CD8-positive, alpha-beta T cell (primary cell): ENCODE measurements at regions of chr7 and their contacts with region 1.

Region 1: GRCh38 chr7:39623018-39623731 is at the start of gene RALA:
- DNase-seq: peak; percentile 75 to 93 (median 91)
- ATAC-seq: peak; percentile 86
- H3K4me3 ChIP-seq: peak within 1 kb of the TSS; percentile 77 to 85
- H3K4me3 Mint-ChIP-seq: peak within 1 kb of the TSS; percentile 97
- H3K27ac ChIP-seq: peak within 1 kb of the TSS; percentile 81 to 89
- H3K27ac Mint-ChIP-seq: peak within 1 kb of the TSS; percentile 98
- H3K4me1 ChIP-seq: peaks cover 38% of the 10 kb centered on the region
- H3K4me1 Mint-ChIP-seq: peaks cover 53% of the 10 kb centered on the region
- H3K27me3 ChIP-seq: no peaks in the 10 kb centered on the region
- H3K27me3 Mint-ChIP-seq: no peaks in the 10 kb centered on the region
- CTCF ChIP-seq: no peak
- total RNA-seq, gene RALA: 35.5 to 37.5 TPM

Region 2: DNA sequence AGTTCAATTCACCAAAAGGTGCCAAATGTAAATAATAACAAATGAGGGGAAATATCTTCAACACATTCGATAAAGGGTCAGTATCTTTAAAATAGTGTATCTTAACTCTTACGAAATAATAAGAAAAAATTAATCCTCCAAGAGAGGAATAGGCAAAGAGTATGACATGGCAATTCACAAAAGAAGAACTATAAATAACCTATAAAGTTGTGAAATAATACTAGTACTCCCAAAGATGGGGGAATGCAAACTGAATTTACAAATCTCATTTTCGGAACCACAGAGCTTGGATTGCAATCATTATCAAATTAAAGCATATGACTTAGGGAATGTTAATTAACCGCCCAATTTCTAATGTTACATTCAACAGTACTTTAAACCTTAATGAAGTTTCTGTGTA is 1271.6 kb before region 1 on chr7:
- CTCF ChIA-PET with region 1: no interaction called
- POLR2A ChIA-PET with region 1: no interaction called
- intact Hi-C with region 1: loop called in 1 of 2 experiments (anchors 10 kb)
- DNase-seq: no peak
- ATAC-seq: no peak
- H3K4me3 ChIP-seq: peak overlapping the region in 1 of 2 experiments; percentile 36
- H3K4me3 Mint-ChIP-seq: peak overlapping the region; percentile 89
- H3K27ac ChIP-seq: peak overlapping the region in 1 of 2 experiments; percentile 4
- H3K27ac Mint-ChIP-seq: peak overlapping the region; percentile 95
- H3K4me1 ChIP-seq: peaks cover 5% of the 10 kb centered on the region
- H3K4me1 Mint-ChIP-seq: peaks cover 62% of the 10 kb centered on the region
- H3K27me3 ChIP-seq: no peaks in the 10 kb centered on the region
- H3K27me3 Mint-ChIP-seq: no peaks in the 10 kb centered on the region
- CTCF ChIP-seq: no peak

Region 3: GRCh38 chr7:39336442-39336841 is 286.7 kb before region 1 on chr7:
- CTCF ChIA-PET with region 1: no interaction called
- POLR2A ChIA-PET with region 1: no interaction called
- intact Hi-C with region 1: no loop called
- DNase-seq: no peak
- ATAC-seq: no peak
- H3K4me3 ChIP-seq: no peak overlapping the region
- H3K4me3 Mint-ChIP-seq: no peak overlapping the region
- H3K27ac ChIP-seq: no peak overlapping the region
- H3K27ac Mint-ChIP-seq: no peak overlapping the region
- H3K4me1 ChIP-seq: no peaks in the 10 kb centered on the region
- H3K4me1 Mint-ChIP-seq: no peaks in the 10 kb centered on the region
- H3K27me3 ChIP-seq: no peaks in the 10 kb centered on the region
- H3K27me3 Mint-ChIP-seq: peaks cover 2% of the 10 kb centered on the region
- CTCF ChIP-seq: no peak

Region 4: DNA sequence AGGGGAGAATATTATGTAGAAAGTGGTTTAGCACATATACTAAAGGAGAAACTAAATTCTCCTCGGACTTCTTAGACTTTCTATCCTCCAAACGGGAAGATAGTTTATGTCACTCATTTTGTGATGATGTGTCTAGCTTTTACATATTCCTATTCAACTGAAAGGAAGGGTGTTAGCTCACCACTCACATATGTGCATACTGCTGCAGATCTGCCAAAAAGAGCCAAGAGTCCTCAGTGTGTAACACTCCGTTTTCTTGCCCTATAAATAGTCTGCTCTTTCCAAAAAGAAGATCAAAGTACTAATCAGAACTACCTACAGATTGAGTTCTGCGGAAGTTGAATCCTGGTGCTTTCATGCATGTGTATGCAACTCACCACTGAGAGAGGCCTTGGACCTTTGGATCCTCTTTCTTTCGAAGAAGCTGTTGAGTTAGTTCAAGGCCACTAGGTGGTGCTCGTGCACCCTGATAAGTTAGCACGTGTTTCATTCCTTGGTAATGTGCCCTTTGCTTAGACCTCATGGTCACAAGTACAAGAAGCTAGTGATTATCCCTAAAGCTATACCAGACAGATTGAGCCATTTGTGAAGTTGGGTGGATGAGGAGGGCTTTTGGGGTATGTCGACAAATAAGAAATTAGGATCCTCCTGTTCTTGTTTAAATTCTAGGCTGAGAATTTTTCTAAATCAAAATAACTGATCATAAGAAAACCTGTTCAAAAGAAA is 42.9 kb before region 1 on chr7:
- CTCF ChIA-PET with region 1: interaction called, 40 read pairs
- POLR2A ChIA-PET with region 1: no interaction called
- intact Hi-C with region 1: loop called in 1 of 2 experiments (anchors 2 kb)
- DNase-seq: peak; percentile 44 to 91 (median 77)
- ATAC-seq: peak; percentile 97
- H3K4me3 ChIP-seq: no peak overlapping the region
- H3K4me3 Mint-ChIP-seq: no peak overlapping the region
- H3K27ac ChIP-seq: no peak overlapping the region
- H3K27ac Mint-ChIP-seq: peak overlapping the region; percentile 7
- H3K4me1 ChIP-seq: no peaks in the 10 kb centered on the region
- H3K4me1 Mint-ChIP-seq: peaks cover 6% of the 10 kb centered on the region
- H3K27me3 ChIP-seq: no peaks in the 10 kb centered on the region
- H3K27me3 Mint-ChIP-seq: no peaks in the 10 kb centered on the region
- CTCF ChIP-seq: peak; percentile 91

Region 5: GRCh38 chr7:39609113-39609934 is 13.9 kb before region 1 on chr7:
- CTCF ChIA-PET with region 1: interaction called, 3 read pairs
- POLR2A ChIA-PET with region 1: interaction called, 14 read pairs
- intact Hi-C with region 1: loop called in 1 of 2 experiments (anchors 1 kb)
- DNase-seq: peak in 5 of 9 experiments; percentile 17 to 64 (median 35)
- ATAC-seq: peak; percentile 55
- H3K4me3 ChIP-seq: peak overlapping the region in 1 of 2 experiments; percentile 5
- H3K4me3 Mint-ChIP-seq: peak overlapping the region; percentile 62
- H3K27ac ChIP-seq: no peak overlapping the region
- H3K27ac Mint-ChIP-seq: peak overlapping the region; percentile 47
- H3K4me1 ChIP-seq: peaks cover 24% of the 10 kb centered on the region
- H3K4me1 Mint-ChIP-seq: peaks cover 34% of the 10 kb centered on the region
- H3K27me3 ChIP-seq: peaks cover 0 to 8% of the 10 kb centered on the region in 2 experiments
- H3K27me3 Mint-ChIP-seq: peaks cover 24% of the 10 kb centered on the region
- CTCF ChIP-seq: no peak

Region 6: GRCh38 chr7:39672176-39672575 is 49.0 kb after region 1 on chr7:
- CTCF ChIA-PET with region 1: no interaction called
- POLR2A ChIA-PET with region 1: interaction called, 3 read pairs
- intact Hi-C with region 1: loop called in 1 of 2 experiments (anchors 10 kb)
- DNase-seq: no peak
- ATAC-seq: no peak
- H3K4me3 ChIP-seq: no peak overlapping the region
- H3K4me3 Mint-ChIP-seq: no peak overlapping the region
- H3K27ac ChIP-seq: no peak overlapping the region
- H3K27ac Mint-ChIP-seq: no peak overlapping the region
- H3K4me1 ChIP-seq: no peaks in the 10 kb centered on the region
- H3K4me1 Mint-ChIP-seq: peaks cover 29% of the 10 kb centered on the region
- H3K27me3 ChIP-seq: no peaks in the 10 kb centered on the region
- H3K27me3 Mint-ChIP-seq: no peaks in the 10 kb centered on the region
- CTCF ChIP-seq: no peak

Region 7: GRCh38 chr7:39746103-39746819 is 123.1 kb after region 1 on chr7:
- CTCF ChIA-PET with region 1: interaction called, 9 read pairs
- POLR2A ChIA-PET with region 1: interaction called, 4 read pairs
- intact Hi-C with region 1: loop called in 1 of 2 experiments (anchors 1 kb)
- DNase-seq: peak in 8 of 9 experiments; percentile 30 to 75 (median 65)
- ATAC-seq: peak; percentile 65
- H3K4me3 ChIP-seq: no peak overlapping the region
- H3K4me3 Mint-ChIP-seq: peak overlapping the region; percentile 49
- H3K27ac ChIP-seq: no peak overlapping the region
- H3K27ac Mint-ChIP-seq: peak overlapping the region; percentile 75
- H3K4me1 ChIP-seq: peaks cover 4% of the 10 kb centered on the region
- H3K4me1 Mint-ChIP-seq: peaks cover 5% of the 10 kb centered on the region
- H3K27me3 ChIP-seq: no peaks in the 10 kb centered on the region
- H3K27me3 Mint-ChIP-seq: no peaks in the 10 kb centered on the region
- CTCF ChIP-seq: peak; percentile 62

Region 8: GRCh38 chr7:40134428-40135316 is 511.5 kb after region 1 on chr7 and contains the starts of genes MPLKIP and SUGCT:
- CTCF ChIA-PET with region 1: no interaction called
- POLR2A ChIA-PET with region 1: interaction called, 3 read pairs
- intact Hi-C with region 1: loop called (anchors 1 to 2 kb)
- DNase-seq: peak; percentile 72 to 93 (median 86)
- ATAC-seq: peak; percentile 89
- H3K4me3 ChIP-seq: peak within 1 kb of the TSS; percentile 86 to 98
- H3K4me3 Mint-ChIP-seq: peak within 1 kb of the TSS; percentile 99
- H3K27ac ChIP-seq: peak within 1 kb of the TSS; percentile 85 to 87
- H3K27ac Mint-ChIP-seq: peak within 1 kb of the TSS; percentile 98
- H3K4me1 ChIP-seq: peaks cover 33% of the 10 kb centered on the region
- H3K4me1 Mint-ChIP-seq: peaks cover 41% of the 10 kb centered on the region
- H3K27me3 ChIP-seq: no peaks in the 10 kb centered on the region
- H3K27me3 Mint-ChIP-seq: no peaks in the 10 kb centered on the region
- CTCF ChIP-seq: peak; percentile 90
- total RNA-seq, gene MPLKIP: 11.2 to 13.3 TPM
- total RNA-seq, gene SUGCT: 1.7 to 3.4 TPM